Psoas muscle (tissue), 8 donors: ENCODE measurements at regions of chr21 and their contacts with region 1.

Region 1: GRCh38 chr21:43659136-43660000 is at the starts of genes HSF2BP and RRP1B:
- DNase-seq: peak; percentile 88 to 92
- ATAC-seq: peak; percentile 95 to 97 (median 96)
- H3K4me3 ChIP-seq: peak within 1 kb of the TSS; percentile 99
- H3K27ac ChIP-seq: peak within 1 kb of the TSS; percentile 93
- H3K4me1 ChIP-seq: peaks cover 12% of the 10 kb centered on the region
- H3K27me3 ChIP-seq: no peaks in the 10 kb centered on the region
- CTCF ChIP-seq: no peak
- total RNA-seq, gene HSF2BP: 0.16 to 0.23 (median 0.19) TPM in 3 of 4 donors, not detected in the other
- total RNA-seq, gene RRP1B: 14.4 to 21.6 (median 18.1) TPM

Region 2: DNA sequence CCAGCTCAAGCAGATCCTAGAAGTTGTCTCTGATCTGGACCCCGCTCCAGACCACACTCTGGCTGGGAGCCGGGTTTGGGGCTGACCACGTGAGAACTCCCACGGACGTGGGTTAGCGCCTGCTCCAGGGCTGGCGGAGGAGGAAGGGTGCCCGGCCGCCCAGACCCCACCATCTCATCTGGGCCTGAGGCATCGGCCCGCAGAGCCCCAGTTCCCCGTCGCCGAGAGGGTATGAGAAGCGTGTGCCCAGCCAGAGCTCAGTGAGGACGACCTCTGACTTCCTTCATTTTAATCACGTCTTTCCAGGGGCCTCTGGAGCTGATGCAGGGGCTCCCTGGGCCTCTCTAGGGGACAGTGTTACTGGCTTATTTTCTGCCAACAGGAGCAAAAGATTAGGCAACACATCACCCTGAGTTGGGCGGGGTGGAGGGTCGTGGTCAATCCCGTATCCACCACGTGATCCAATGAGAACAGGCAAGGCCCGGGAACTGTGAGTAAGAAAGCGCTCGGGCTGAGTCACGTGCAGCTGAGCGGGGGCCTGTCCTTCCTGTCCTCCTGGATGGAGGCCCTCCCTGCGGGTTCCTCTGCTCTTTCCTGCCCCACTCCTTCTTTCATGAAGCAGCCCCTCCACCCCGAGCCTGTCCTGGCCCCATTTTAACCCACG is 313.5 kb before region 1 on chr21:
- intact Hi-C with region 1: loop called in 1 of 2 experiments (anchors 10 kb)
- DNase-seq: no peak
- ATAC-seq: no peak
- H3K4me3 ChIP-seq: no peak overlapping the region
- H3K27ac ChIP-seq: no peak overlapping the region
- H3K4me1 ChIP-seq: peaks cover 17% of the 10 kb centered on the region
- H3K27me3 ChIP-seq: no peaks in the 10 kb centered on the region
- CTCF ChIP-seq: no peak

Region 3: DNA sequence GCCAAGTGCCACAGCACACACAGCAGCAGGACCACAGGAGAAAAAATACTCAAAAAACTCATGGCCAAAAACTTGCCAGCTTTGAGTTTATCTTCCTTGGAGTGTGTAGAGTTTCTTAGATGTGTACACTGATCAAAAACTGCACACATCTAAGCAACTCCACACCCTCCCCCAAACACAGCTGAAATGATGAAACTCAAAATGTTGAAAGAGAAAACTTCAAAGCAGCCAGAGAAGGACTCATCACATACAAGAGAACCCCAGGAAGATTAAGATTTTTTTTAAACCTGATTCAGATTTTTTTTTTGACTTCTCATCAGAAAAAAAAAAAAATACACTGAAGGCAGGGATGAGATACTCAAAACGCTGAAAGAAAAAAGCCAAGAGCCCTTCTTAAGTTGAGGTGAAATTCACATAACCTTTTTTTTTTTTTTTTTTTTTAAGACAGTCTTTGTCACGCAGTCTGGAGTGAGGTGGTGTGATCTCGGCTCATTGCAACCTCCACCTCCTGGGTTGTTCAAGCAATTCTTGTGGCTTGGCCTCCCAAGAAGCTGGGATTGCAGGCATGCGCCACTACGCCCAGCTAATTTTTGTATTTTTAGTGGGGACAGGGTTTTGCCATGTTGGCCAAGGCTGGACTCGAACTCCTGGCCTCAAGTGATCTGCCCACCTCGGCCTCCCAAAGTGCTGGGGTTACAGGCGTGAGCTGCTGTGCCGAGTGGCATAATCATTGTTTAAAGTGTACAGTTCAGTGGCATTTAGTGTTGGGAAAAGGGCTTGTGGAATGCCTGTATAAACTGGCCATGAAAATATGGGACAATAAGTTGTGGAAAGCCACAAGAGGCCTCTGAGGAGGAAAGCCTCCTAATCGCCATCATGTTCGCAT is 38.6 kb after region 1 on chr21:
- intact Hi-C with region 1: loop called in 1 of 2 experiments (anchors 5 kb)
- DNase-seq: no peak
- ATAC-seq: no peak
- H3K4me3 ChIP-seq: no peak overlapping the region
- H3K27ac ChIP-seq: no peak overlapping the region
- H3K4me1 ChIP-seq: no peaks in the 10 kb centered on the region
- H3K27me3 ChIP-seq: no peaks in the 10 kb centered on the region
- CTCF ChIP-seq: no peak

Region 4: DNA sequence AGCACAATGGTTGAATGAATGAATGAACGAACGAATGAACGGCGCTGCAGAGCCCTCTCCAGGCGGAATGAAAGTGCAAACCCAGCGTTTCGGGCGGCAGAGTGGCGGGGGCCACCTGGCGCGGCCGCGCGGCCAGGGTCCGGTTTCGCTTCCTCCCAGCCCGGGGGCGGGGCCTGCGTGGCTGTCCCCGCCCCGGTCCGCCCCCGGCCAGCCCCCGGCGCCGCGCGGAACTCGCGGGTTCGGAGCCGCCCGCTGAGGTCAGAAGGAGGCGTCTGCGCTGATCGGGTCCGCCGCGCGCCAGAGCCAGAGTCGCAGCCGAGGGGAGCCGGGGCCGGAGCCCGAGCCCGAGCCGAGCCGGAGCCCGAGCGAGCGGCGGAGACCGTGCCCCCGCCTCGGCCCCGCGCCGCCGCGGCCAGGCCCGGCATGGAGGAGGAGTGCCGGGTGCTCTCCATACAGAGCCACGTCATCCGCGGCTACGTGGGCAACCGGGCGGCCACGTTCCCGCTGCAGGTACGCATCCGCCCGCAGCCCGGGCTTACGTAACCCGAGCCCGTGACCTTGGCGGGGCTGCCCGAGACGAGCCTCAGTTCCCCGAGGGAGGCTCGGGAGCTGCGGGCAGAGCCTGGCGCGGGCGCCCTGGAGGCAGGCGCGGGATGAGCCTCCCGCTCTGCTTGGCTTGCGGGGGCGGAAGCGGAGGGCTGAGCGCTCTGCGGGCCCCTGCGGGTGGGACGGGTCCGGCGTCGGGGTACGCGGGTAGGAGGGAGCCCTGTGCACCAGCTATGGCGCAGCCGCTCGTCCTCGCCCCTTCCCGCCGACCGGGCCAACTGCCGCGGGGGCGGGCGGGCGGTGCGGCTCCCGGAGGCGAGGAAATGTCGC is 59.7 kb after region 1 on chr21 and contains the start of gene PDXK:
- intact Hi-C with region 1: loop called in 1 of 2 experiments (anchors 5 kb)
- DNase-seq: peak; percentile 87 to 91
- ATAC-seq: peak; percentile 91 to 93 (median 92)
- H3K4me3 ChIP-seq: peak within 1 kb of the TSS; percentile 85
- H3K27ac ChIP-seq: peak within 1 kb of the TSS; percentile 86
- H3K4me1 ChIP-seq: peaks cover 16% of the 10 kb centered on the region
- H3K27me3 ChIP-seq: no peaks in the 10 kb centered on the region
- CTCF ChIP-seq: no peak
- total RNA-seq, gene PDXK: 28.8 to 43.2 (median 38.5) TPM

Region 5: DNA sequence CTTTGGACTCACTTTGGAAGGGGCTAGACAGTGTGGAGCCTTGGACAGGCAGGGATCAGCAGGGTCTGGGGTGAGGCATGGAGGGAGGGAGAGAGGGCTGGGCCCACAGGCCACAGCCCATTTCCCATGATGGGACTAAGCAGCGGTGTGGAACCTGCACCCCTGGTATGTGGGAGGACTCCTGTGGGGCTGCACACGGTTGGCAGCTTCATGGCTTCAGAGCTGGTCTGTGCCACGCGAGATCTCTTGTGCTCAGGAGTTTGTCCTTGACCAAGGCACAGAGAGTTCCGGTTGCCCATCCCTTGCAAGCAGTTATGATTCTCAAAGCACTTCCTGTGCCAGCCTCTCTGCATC is 1222.2 kb after region 1 on chr21:
- intact Hi-C with region 1: no loop called
- DNase-seq: peak in 1 of 2 donors; percentile 30
- ATAC-seq: peak in 1 of 4 donors; percentile 22
- H3K4me3 ChIP-seq: no peak overlapping the region
- H3K27ac ChIP-seq: no peak overlapping the region
- H3K4me1 ChIP-seq: no peaks in the 10 kb centered on the region
- H3K27me3 ChIP-seq: no peaks in the 10 kb centered on the region
- CTCF ChIP-seq: no peak